MCF 10A (cell line): ENCODE measurements at regions of chr15 and their contacts with region 1.

Region 1: GRCh38 chr15:62770752-62771151 is 271.8 kb upstream of the TPM1 start:
- DNase-seq: peak; percentile 76
- H3K4me3 Mint-ChIP-seq: no peak overlapping the region
- H3K27ac Mint-ChIP-seq: peak overlapping the region; percentile 33
- H3K4me1 Mint-ChIP-seq: peaks cover 18% of the 10 kb centered on the region
- H3K27me3 Mint-ChIP-seq: no peaks in the 10 kb centered on the region
- CTCF ChIP-seq: no peak

Region 2: GRCh38 chr15:61828012-61828411 is 942.7 kb before region 1 on chr15:
- CTCF ChIA-PET with region 1: no interaction called
- POLR2A ChIA-PET with region 1: no interaction called
- intact Hi-C with region 1: no loop called
- DNase-seq: no peak
- H3K4me3 Mint-ChIP-seq: no peak overlapping the region
- H3K27ac Mint-ChIP-seq: no peak overlapping the region
- H3K4me1 Mint-ChIP-seq: no peaks in the 10 kb centered on the region
- H3K27me3 Mint-ChIP-seq: no peaks in the 10 kb centered on the region
- CTCF ChIP-seq: no peak

Region 3: DNA sequence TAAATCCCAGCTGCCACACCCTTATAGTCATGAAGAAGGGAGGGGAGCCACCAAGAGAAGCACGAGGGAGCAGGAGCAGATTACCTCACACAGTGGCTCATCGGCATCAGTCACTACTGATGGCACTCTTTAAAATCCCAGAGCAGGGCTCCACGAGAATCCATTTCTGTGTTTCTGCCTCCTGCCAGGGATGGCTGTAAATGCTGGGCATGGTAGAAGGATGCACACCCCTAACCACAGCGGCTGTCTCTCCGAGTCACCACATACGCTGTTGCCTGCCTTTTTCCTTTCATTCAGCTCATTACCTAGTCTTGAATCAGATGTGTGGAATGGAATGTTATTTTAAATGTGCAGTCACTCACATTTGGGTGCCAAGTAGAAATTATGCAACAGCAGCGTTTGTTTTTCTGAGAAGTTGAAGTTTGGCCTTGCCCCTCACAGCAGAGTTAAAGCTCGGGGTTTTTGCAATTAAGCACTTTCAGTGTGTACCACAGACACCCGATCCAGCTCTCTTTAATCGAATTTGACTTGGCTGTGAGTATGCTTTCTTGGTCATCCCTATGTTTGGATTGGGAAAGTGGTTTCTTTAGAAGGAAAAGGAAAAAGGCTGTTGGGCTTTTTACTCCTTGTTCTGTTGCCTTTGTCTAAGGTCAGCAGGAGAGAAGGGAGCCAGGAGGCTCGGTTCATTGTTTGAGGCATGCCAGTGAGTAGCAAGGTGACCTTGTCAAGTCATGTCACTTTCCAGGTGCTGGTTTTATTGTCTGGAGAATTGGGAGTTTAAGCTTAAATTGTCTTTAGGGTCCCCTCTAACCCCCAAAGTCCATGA is 12.4 kb before region 1 on chr15:
- CTCF ChIA-PET with region 1: no interaction called
- POLR2A ChIA-PET with region 1: interaction called, 11 read pairs
- intact Hi-C with region 1: no loop called
- DNase-seq: peak; percentile 86
- H3K4me3 Mint-ChIP-seq: peak overlapping the region; percentile 47
- H3K27ac Mint-ChIP-seq: peak overlapping the region; percentile 74
- H3K4me1 Mint-ChIP-seq: peaks cover 30% of the 10 kb centered on the region
- H3K27me3 Mint-ChIP-seq: no peaks in the 10 kb centered on the region
- CTCF ChIP-seq: no peak